ENCODE measurements at regions of chr17 and their contacts with region 1.

Region 1: GRCh38 chr17:19447085-19447583 is 36.1 kb downstream of the RNF112 start:
- DNase-seq: peak; percentile 75
- H3K4me3 ChIP-seq: no peak overlapping the region
- H3K27ac ChIP-seq: no peak overlapping the region
- H3K4me1 ChIP-seq: no peaks in the 10 kb centered on the region
- CTCF ChIP-seq: peak; percentile 96

Region 2: GRCh38 chr17:19317359-19318095 is 129.6 kb before region 1 on chr17:
- CTCF ChIA-PET with region 1: no interaction called
- POLR2A ChIA-PET with region 1: no interaction called
- intact Hi-C with region 1: loop called (anchors 1 kb)
- DNase-seq: peak; percentile 91
- H3K4me3 ChIP-seq: peak overlapping the region; percentile 36
- H3K27ac ChIP-seq: peak overlapping the region; percentile 45
- H3K4me1 ChIP-seq: peaks cover 37% of the 10 kb centered on the region
- CTCF ChIP-seq: peak; percentile 75

Region 3: GRCh38 chr17:19338031-19338990 is 108.8 kb before region 1 on chr17:
- CTCF ChIA-PET with region 1: no interaction called
- POLR2A ChIA-PET with region 1: no interaction called
- intact Hi-C with region 1: loop called (anchors 1 kb)
- DNase-seq: peak; percentile 81
- H3K4me3 ChIP-seq: no peak overlapping the region
- H3K27ac ChIP-seq: no peak overlapping the region
- H3K4me1 ChIP-seq: peaks cover 3% of the 10 kb centered on the region
- CTCF ChIP-seq: peak; percentile 85

Region 4: GRCh38 chr17:19397556-19398041 is 49.5 kb before region 1 on chr17:
- CTCF ChIA-PET with region 1: no interaction called
- POLR2A ChIA-PET with region 1: no interaction called
- intact Hi-C with region 1: loop called (anchors 1 kb)
- DNase-seq: peak; percentile 80
- H3K4me3 ChIP-seq: no peak overlapping the region
- H3K27ac ChIP-seq: no peak overlapping the region
- H3K4me1 ChIP-seq: peaks cover 13% of the 10 kb centered on the region
- CTCF ChIP-seq: peak; percentile 82

Region 5: GRCh38 chr17:19706791-19707727 is 259.9 kb after region 1 on chr17:
- CTCF ChIA-PET with region 1: no interaction called
- POLR2A ChIA-PET with region 1: no interaction called
- intact Hi-C with region 1: no loop called
- DNase-seq: no peak
- H3K4me3 ChIP-seq: no peak overlapping the region
- H3K27ac ChIP-seq: no peak overlapping the region
- H3K4me1 ChIP-seq: no peaks in the 10 kb centered on the region
- CTCF ChIP-seq: no peak

Region 6: DNA sequence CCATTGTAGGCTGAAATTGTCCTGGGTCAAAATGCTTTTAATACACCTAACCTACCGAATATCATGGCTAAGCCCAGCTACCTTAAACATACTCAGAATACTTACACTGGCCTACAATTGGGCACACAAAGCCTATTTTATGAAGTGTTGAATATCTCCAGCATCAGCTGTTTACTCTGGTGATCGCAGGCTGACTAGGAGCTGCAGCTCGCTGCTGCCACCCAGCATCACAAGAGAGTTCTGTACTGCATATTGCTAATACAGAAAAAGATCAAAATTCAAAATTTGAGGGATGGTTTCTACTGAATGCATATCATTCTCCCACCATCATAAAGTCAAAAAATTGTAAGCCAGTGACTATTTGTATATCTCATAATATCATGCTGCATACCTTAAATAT is 365.3 kb after region 1 on chr17:
- CTCF ChIA-PET with region 1: no interaction called
- POLR2A ChIA-PET with region 1: no interaction called
- intact Hi-C with region 1: no loop called
- DNase-seq: peak; percentile 25
- H3K4me3 ChIP-seq: no peak overlapping the region
- H3K27ac ChIP-seq: no peak overlapping the region
- H3K4me1 ChIP-seq: no peaks in the 10 kb centered on the region
- CTCF ChIP-seq: peak; percentile 71